ENCODE measurements at regions of chr7 and their contacts with region 1.

Region 1: DNA sequence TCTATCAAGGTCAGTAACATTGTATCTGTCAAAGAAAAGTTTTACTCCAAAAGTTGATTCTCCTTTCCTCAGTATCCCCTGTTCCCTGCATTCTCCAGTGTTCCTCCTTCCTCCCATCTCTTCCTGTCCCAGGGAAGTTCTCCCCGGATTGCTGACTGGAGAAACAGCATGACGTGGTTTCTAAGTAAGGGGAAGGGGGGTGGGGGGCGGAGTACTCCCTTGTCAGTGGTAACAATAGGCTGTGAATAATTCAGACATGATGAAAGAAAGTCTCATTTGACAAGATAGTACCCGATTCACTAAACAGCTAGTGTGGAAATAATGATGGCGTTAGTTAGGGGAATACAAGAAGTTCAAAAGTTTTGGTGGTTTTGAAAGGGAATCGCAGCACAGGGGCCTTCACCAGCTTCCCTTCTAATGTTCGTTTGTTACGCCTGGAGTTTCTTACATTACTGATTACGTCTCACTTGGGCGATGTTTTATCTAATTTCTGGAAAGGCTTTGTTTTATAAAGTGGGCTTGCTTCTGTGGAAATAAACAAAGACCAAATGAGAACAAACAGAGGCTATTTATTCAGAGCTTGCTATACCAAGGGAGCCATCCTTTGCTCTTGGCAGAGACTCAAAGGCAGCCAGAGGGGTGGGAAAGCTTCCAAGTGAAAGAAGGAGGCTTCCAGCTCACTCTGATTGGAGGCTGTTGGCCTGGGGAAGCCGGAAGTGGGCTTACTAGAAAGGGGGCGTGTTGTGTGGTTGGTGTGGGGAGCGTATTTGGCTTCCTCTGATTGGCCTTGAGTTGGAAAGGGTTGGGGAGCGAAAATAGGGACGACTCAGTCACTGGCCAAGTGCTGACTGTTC is 453.7 kb downstream of the SDK1 start:
- DNase-seq: peak; percentile 40 to 83 (median 65)
- H3K4me3 ChIP-seq: peak overlapping the region in 53 of 59 donors; percentile 1 to 56 (median 28)
- H3K27ac ChIP-seq: peak overlapping the region in 58 of 59 donors; percentile 39 to 94 (median 82)
- H3K27me3 ChIP-seq: no peaks in the 10 kb centered on the region
- CTCF ChIP-seq: peak in 9 of 56 donors; percentile 3 to 28 (median 18)

Region 2: GRCh38 chr7:3722396-3722922 is 32.3 kb before region 1 on chr7:
- intact Hi-C with region 1: loop called in 1 of 2 experiments (anchors 5 kb)
- DNase-seq: peak in 5 of 10 donors; percentile 27 to 56 (median 46)
- H3K4me3 ChIP-seq: peak overlapping the region in 17 of 59 donors; percentile 1 to 37 (median 21)
- H3K27ac ChIP-seq: no peak overlapping the region
- H3K27me3 ChIP-seq: no peaks in the 10 kb centered on the region
- CTCF ChIP-seq: peak in 53 of 56 donors; percentile 19 to 72 (median 48)

Region 3: DNA sequence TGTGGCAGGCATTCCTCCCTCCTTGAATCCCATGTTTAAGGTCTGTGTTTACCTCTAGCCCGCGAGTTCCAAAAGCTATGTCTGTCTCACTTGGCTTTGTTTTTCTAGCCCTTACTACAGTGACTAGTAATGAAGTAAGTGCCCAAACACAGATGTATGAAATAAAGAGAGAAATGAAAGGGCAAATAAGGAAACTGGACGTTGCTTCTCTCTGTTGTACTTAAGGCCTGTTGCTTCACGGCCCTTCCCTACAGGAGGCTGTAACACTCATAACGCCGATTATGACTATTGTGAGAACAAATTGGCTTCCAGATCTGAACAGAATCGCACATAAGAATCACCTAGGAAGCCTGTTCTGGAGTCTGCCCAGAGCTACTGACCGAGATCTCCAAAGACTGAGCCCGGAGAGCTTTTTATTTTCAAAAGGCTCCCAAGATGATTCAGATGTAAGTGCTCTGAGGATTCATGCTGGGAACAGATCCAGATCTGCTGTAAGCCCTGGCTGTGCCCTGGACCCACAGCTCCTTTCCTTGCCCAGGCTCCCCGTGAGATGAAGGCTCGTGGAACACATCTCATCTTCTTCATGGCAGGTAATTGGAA is 21.1 kb before region 1 on chr7:
- intact Hi-C with region 1: loop called in 1 of 2 experiments (anchors 2 kb)
- DNase-seq: no peak
- H3K4me3 ChIP-seq: no peak overlapping the region
- H3K27ac ChIP-seq: no peak overlapping the region
- H3K27me3 ChIP-seq: no peaks in the 10 kb centered on the region
- CTCF ChIP-seq: no peak

Region 4: GRCh38 chr7:3909128-3909527 is 154.4 kb after region 1 on chr7:
- intact Hi-C with region 1: loop called (anchors 2 to 10 kb)
- DNase-seq: no peak
- H3K4me3 ChIP-seq: peak overlapping the region in 1 of 59 donors; percentile 7
- H3K27ac ChIP-seq: peak overlapping the region in 25 of 59 donors; percentile 65 to 96 (median 85)
- H3K27me3 ChIP-seq: no peaks in the 10 kb centered on the region
- CTCF ChIP-seq: no peak

Region 5: GRCh38 chr7:3916146-3916545 is 161.4 kb after region 1 on chr7:
- intact Hi-C with region 1: loop called in 1 of 2 experiments (anchors 10 kb)
- DNase-seq: no peak
- H3K4me3 ChIP-seq: no peak overlapping the region
- H3K27ac ChIP-seq: no peak overlapping the region
- H3K27me3 ChIP-seq: no peaks in the 10 kb centered on the region
- CTCF ChIP-seq: no peak

Measured in dorsolateral prefrontal cortex (tissue), 120 donors.